Posterior vena cava (tissue), 2 donors: ENCODE measurements at regions of chr10 and their contacts with region 1.

Region 1: GRCh38 chr10:71319042-71319799 is at the start of gene SLC29A3:
- DNase-seq: peak; percentile 94
- total RNA-seq, gene SLC29A3: 3.5 to 6.2 TPM

Region 2: GRCh38 chr10:71569775-71570588 is 250.8 kb after region 1 on chr10:
- intact Hi-C with region 1: loop called in 1 of 2 experiments (anchors 10 kb)
- DNase-seq: peak; percentile 86

Region 3: DNA sequence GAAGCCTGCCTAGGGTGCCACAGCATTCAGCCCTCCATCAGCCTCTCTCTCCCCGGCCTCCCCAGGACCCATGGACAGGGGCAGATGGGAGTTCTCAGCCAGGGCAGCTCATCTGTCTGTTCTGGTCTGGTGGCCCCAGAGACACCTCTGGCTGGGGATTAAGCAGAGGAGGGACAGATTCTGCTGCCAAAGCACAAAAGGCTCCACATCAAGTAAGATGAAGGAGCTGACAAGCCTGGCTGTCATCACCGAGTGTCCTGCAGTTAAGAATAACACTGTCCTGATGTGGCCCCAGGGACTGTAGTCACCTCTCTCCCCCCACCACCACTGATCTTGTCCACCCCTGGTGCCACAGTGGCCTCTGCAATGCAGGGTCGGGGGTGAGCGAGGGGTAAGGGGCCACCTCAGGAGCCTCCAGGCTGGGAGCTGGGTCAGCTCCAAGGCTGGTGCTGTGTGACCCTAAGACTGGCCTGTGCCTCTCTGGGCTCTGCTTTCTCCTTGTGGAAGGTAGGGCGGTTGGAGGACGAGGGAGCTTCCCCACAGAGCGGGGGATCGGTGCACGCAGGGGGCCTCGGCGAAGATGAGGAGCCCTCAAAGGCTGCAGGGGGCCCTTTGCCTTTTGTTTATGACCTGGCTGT is 381.6 kb after region 1 on chr10:
- intact Hi-C with region 1: loop called (anchors 5 to 10 kb)
- DNase-seq: no peak

Region 4: GRCh38 chr10:71708301-71708703 is 389.1 kb after region 1 on chr10:
- intact Hi-C with region 1: loop called (anchors 5 to 10 kb)
- DNase-seq: peak; percentile 89

Region 5: DNA sequence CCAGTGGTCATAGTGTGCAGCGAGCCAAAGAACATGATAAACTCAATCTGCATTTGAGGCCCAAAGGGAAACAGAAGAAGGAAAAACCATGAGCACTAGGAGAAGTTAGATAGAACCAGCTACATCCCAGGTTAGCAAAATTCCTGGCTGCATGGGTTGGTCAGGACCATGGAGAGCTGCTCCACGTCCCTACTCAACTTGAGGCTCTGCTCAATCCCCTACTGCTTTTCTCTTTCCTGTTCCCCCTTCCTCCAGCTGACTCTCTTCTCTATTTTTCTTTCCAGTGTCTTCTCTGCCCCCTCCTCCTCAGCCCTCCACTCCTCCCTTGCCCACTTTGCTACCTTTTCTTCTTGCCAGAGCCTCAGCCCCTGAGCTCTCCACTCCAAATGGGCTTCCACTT is 476.0 kb after region 1 on chr10:
- intact Hi-C with region 1: loop called in 1 of 2 experiments (anchors 10 kb)
- DNase-seq: no peak

Region 6: GRCh38 chr10:71812016-71812912 is 493.0 kb after region 1 on chr10:
- intact Hi-C with region 1: loop called in 1 of 2 experiments (anchors 10 kb)
- DNase-seq: peak; percentile 92

Region 7: DNA sequence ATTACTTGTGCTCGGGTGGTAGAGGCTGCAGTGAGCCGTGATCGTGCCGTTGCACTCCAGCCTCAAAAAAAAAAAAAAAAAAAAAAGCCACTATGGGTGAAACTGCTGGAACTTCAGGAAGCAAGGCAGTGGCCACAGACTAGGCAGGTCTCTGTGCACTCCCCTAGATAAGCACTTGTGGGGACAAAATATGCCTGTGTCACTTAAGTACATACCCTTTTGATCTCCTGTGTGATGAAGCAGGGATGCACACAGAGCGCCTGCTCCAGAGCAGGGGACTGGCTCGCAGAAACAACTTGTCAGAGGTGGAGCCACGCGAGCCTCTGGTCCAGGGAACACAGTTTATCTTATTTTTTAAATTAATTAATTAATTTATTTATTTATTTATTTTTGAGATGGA is 574.7 kb after region 1 on chr10:
- intact Hi-C with region 1: loop called in 1 of 2 experiments (anchors 10 kb)
- DNase-seq: peak; percentile 32